Dendritic cell treated with granulocyte-macrophage colony-stimulating factor and Interleukin-4, amounts not matched to agents 40 ng/mL and 50 ng/mL, for 4 days (primary cell): ENCODE measurements at regions of chr18 and their contacts with region 1.

Region 1: DNA sequence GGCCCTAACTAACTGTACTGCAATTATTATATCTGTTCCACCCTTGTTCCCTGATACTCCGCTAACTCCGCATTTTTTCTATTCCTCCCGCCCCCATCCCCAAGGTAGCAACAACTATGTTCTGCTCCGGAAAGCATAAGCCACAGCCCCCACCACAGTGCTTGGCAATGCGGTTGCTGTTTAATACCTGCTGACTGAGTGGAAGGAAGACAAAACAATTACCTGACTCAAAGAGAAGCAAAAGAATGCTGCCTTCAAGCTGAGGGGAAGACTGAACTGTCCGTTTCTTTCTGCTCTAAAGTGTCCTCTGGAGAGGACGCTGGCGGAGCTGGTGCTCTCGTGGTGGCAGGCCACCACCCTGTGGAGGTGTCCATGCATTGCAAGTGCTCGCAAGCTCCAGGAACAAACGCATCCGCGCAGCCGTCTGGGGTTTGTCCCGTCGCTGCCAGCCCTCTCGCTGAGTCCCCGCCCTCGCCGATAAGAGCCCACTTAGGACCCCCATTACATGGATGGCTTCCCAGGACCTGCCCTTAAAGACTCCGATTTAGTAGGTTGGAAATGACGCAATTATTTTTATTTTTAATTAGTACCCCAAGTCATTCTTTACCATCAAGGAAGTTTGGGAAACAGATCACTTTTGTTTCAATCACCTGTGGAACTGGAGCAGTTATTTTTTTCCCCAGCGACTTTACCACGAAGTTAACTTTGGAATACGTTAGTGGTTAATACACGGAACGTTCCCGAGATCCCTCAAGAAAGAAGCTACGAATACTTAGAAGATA is 1.6 kb upstream of the MYL12A start:
- H3K4me3 Mint-ChIP-seq: peak overlapping the region; percentile 85
- H3K27ac Mint-ChIP-seq: peak overlapping the region; percentile 99
- H3K4me1 Mint-ChIP-seq: peaks cover 42% of the 10 kb centered on the region
- H3K27me3 Mint-ChIP-seq: no peaks in the 10 kb centered on the region

Region 2: GRCh38 chr18:2655178-2655953 is 590.7 kb before region 1 on chr18 and contains the start of gene SMCHD1:
- intact Hi-C with region 1: loop called (anchors 5 kb)
- H3K4me3 Mint-ChIP-seq: peak within 1 kb of the TSS; percentile 94
- H3K27ac Mint-ChIP-seq: peak within 1 kb of the TSS; percentile 98
- H3K4me1 Mint-ChIP-seq: peaks cover 23% of the 10 kb centered on the region
- H3K27me3 Mint-ChIP-seq: no peaks in the 10 kb centered on the region

Region 3: DNA sequence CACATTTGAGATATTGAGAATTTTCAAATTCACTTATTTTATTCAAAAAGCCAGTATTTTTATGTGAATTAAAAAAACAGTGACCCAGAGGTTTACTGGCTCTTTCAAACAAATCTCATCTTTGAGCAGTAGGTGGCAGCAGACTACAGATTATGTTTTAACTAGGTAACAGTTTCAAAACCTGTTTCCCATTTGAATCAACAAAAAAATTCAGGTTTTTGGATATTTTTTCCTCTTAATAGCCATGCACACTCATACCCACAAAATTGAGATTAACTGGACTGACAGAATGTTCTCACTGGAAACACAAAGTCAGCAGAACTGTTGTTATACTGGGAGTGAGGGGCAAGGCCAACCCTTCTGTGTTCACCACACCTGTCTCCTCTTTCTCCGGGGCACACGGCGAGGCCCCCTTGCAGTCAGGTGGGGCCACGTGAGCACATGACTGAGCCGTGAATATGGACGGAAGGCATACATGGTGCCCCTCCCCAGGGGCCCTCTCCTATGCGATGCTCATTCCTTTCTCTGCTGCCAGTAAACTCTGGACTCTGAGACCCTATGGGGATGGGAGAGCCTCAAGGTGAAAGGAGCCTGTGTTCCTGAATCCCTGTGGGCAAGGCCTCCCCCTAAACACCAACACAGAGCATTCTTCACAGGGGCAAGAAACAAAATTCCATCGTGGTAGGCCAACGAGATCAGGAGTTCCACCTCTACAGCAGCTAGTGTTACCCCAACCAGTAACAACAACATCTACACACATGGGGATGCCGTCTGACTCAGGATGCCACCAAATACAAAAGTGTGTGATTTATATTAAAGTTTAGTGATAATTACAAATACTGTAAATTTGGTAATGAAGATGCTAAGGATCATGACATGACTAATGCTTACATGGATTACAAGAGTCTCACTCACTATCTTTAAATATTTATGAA is 313.5 kb before region 1 on chr18:
- intact Hi-C with region 1: loop called (anchors 1 kb)
- H3K4me3 Mint-ChIP-seq: no peak overlapping the region
- H3K27ac Mint-ChIP-seq: no peak overlapping the region
- H3K4me1 Mint-ChIP-seq: peaks cover 6% of the 10 kb centered on the region
- H3K27me3 Mint-ChIP-seq: no peaks in the 10 kb centered on the region

Region 4: GRCh38 chr18:3012964-3013804 is 232.9 kb before region 1 on chr18 and contains the start of gene LPIN2:
- intact Hi-C with region 1: loop called (anchors 5 kb)
- H3K4me3 Mint-ChIP-seq: peak within 1 kb of the TSS; percentile 78
- H3K27ac Mint-ChIP-seq: peak within 1 kb of the TSS; percentile 83
- H3K4me1 Mint-ChIP-seq: peaks cover 74% of the 10 kb centered on the region
- H3K27me3 Mint-ChIP-seq: no peaks in the 10 kb centered on the region

Region 5: GRCh38 chr18:3177902-3178687 is 67.9 kb before region 1 on chr18:
- intact Hi-C with region 1: loop called (anchors 2 kb)
- H3K4me3 Mint-ChIP-seq: peak overlapping the region; percentile 24
- H3K27ac Mint-ChIP-seq: peak overlapping the region; percentile 94
- H3K4me1 Mint-ChIP-seq: peaks cover 51% of the 10 kb centered on the region
- H3K27me3 Mint-ChIP-seq: no peaks in the 10 kb centered on the region

Region 6: DNA sequence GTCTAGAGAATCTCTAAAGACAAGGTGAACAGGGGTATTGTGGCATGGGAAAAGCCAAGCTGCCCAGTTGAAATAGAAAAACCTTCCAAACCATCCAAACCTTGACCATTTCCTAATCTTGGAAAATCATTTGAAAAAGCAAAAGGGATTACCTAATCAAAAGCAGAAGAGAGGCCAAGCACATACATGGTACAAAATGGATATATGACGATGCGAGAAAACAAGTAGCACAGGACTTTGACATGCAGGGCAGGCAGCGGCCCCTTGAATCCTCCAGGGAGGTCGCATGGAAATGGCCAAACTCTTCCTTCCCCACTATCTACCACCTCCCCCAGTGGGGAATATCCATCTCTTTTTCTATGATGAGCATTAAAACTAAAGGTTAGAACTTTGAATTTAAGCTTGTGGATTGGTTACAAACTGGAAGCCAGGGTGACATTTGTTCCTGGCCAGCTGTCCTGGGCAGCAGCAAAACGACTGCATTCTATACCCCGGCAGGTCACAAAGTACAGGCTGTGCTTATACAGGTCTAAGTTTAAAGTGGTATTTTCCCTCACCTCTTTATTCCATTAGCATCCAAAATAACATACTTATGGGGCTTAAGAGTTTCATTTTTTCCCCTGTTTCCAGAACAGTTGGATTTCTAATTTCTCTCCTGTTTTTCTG is 51.0 kb before region 1 on chr18:
- intact Hi-C with region 1: no loop called
- H3K4me3 Mint-ChIP-seq: no peak overlapping the region
- H3K27ac Mint-ChIP-seq: no peak overlapping the region
- H3K4me1 Mint-ChIP-seq: peaks cover 8% of the 10 kb centered on the region
- H3K27me3 Mint-ChIP-seq: no peaks in the 10 kb centered on the region